Activated B cell treated with CpG ODN at 0.5 μM for 24 hours (primary cell): ENCODE measurements at regions of chr10 and their contacts with region 1.

Region 1: DNA sequence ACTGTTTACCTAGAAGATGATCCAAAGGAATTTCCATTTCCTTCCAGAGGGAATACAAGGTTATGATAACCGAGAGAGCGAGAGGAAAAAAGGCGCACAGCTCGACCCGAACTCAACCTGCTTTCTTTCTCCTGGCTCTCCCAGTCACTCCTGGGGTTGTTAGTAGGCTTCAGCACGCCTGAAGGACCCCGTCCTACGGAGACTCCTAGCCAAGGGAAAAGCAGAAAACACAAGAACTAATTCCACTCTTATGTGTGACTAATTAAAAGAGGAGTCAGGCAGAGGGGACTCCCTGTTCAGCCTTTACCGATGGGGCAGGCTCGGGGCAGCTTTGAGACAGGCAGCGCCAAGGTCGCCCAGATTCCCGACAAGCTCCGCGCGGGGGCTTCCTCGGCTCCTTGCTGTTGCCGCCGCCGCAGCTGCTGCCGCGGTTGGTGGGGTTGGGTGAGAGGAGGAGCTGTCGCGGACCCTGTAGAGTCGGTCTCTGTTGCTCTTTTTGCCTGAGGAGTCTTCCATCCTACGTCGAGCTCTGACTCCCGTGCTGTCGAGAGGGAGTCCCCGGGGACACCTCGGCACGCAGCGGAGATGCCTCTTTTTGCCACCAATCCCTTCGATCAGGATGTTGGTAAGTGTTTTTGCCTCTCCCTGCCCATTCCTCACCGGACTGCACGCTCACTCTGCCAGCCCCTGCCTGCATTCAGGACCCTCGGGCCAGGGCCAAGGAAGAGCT is at the start of gene STAM:
- DNase-seq: peak; percentile 86
- ATAC-seq: peak; percentile 91
- H3K4me3 Mint-ChIP-seq: peak within 1 kb of the TSS; percentile 99
- H3K27ac Mint-ChIP-seq: peak within 1 kb of the TSS; percentile 100
- H3K4me1 Mint-ChIP-seq: peaks cover 54% of the 10 kb centered on the region
- H3K27me3 Mint-ChIP-seq: no peaks in the 10 kb centered on the region
- CTCF ChIP-seq: no peak
- total RNA-seq, gene STAM: 25.5 and 28.7 TPM in 2 replicates

Region 2: DNA sequence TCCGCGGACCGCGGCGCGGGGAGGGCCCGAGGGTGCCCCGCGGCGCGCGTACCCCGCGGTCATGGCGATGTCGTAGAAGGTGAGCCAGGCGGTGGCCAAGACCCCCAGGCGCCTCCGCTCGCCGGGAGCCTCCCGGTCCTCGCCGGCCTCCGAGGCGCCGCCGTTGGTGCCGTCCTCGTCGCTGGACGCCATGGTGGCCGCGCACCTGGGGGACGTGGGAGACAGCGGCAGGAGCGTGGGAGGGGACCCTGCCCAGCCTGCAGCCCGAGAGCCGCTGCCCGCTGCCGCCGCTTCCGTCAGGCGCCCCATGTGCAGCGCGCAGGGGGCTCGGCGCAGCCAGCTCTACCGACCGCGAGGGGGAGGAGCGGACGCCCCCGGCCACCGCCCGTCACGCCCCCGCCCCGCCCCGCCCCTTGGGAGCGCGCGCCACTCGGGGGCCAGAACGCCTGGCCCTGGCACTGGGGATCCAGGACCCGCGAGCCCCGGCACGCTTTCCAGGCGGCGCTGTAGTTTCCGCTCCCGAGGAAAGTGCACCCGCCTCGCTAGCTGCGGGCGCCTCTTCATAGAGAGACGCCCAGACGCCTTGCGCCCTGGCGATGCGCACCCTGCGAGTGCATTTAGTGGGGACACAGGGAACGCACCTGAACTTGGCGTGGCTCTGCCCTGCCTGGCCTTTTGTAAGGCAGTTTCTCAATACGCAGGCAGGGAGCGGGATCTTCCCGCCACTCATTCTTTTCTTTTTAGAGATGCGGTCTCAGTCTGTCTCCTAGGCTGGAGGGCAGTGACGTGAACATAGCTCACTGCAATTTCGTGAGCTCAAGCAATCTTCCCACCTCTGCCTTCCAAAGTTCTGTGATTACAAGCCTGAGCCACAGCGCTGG is 26.6 kb before region 1 on chr10 and contains the start of gene HACD1:
- CTCF ChIA-PET with region 1: interaction called, 4 read pairs
- POLR2A ChIA-PET with region 1: interaction called, 10 read pairs
- intact Hi-C with region 1: loop called (anchors 1 kb)
- DNase-seq: peak; percentile 37
- ATAC-seq: peak; percentile 74
- H3K4me3 Mint-ChIP-seq: peak within 1 kb of the TSS; percentile 82
- H3K27ac Mint-ChIP-seq: no peak within 1 kb of the TSS
- H3K4me1 Mint-ChIP-seq: peaks cover 9% of the 10 kb centered on the region
- H3K27me3 Mint-ChIP-seq: peaks cover 16% of the 10 kb centered on the region
- CTCF ChIP-seq: no peak
- total RNA-seq, gene HACD1: 1.8 and 2.6 TPM in 2 replicates

Region 3: GRCh38 chr10:17655567-17656146 is 11.7 kb after region 1 on chr10:
- CTCF ChIA-PET with region 1: interaction called, 3 read pairs
- POLR2A ChIA-PET with region 1: interaction called, 22 read pairs
- intact Hi-C with region 1: loop called (anchors 1 kb)
- DNase-seq: no peak
- ATAC-seq: peak; percentile 91
- H3K4me3 Mint-ChIP-seq: peak overlapping the region; percentile 50
- H3K27ac Mint-ChIP-seq: peak overlapping the region; percentile 70
- H3K4me1 Mint-ChIP-seq: peaks cover 59% of the 10 kb centered on the region
- H3K27me3 Mint-ChIP-seq: no peaks in the 10 kb centered on the region
- CTCF ChIP-seq: no peak

Region 4: DNA sequence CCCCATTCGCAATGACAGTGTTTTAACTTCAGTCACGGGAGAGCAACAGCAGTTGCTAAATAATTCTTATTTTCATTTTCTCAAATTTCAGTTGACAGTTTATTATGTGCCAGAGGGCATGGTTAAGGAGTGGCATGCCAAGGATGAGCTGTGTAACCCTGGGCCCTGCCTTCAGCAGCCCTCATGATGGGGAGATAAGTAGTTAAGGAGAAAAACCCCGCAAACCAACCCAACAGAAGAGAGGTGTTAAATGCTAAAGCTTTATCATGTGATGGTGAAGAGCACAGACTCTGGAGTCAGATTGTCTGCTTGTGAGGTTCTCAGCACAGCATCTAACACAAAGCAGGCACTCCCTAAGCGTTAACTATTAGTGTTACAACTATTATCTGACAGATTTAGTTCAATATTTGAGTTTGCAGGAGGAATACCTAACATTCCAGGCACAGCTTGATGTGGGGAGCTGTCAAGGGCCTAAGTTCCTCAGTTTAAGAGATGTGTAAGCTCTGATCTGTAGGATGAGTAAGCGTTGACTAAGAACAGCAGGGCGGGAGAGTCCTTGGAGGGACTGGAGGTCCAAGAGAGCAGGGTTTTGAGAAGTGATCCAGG is 29.6 kb after region 1 on chr10:
- CTCF ChIA-PET with region 1: no interaction called
- POLR2A ChIA-PET with region 1: interaction called, 27 read pairs
- intact Hi-C with region 1: loop called (anchors 1 kb)
- DNase-seq: no peak
- ATAC-seq: no peak
- H3K4me3 Mint-ChIP-seq: no peak overlapping the region
- H3K27ac Mint-ChIP-seq: no peak overlapping the region
- H3K4me1 Mint-ChIP-seq: peaks cover 38% of the 10 kb centered on the region
- H3K27me3 Mint-ChIP-seq: no peaks in the 10 kb centered on the region
- CTCF ChIP-seq: no peak

Region 5: GRCh38 chr10:17685233-17685840 is 41.4 kb after region 1 on chr10:
- CTCF ChIA-PET with region 1: interaction called, 3 read pairs
- POLR2A ChIA-PET with region 1: interaction called, 8 read pairs
- intact Hi-C with region 1: loop called (anchors 2 kb)
- DNase-seq: no peak
- ATAC-seq: peak; percentile 79
- H3K4me3 Mint-ChIP-seq: peak overlapping the region; percentile 12
- H3K27ac Mint-ChIP-seq: peak overlapping the region; percentile 59
- H3K4me1 Mint-ChIP-seq: peaks cover 35% of the 10 kb centered on the region
- H3K27me3 Mint-ChIP-seq: no peaks in the 10 kb centered on the region
- CTCF ChIP-seq: no peak

Region 6: DNA sequence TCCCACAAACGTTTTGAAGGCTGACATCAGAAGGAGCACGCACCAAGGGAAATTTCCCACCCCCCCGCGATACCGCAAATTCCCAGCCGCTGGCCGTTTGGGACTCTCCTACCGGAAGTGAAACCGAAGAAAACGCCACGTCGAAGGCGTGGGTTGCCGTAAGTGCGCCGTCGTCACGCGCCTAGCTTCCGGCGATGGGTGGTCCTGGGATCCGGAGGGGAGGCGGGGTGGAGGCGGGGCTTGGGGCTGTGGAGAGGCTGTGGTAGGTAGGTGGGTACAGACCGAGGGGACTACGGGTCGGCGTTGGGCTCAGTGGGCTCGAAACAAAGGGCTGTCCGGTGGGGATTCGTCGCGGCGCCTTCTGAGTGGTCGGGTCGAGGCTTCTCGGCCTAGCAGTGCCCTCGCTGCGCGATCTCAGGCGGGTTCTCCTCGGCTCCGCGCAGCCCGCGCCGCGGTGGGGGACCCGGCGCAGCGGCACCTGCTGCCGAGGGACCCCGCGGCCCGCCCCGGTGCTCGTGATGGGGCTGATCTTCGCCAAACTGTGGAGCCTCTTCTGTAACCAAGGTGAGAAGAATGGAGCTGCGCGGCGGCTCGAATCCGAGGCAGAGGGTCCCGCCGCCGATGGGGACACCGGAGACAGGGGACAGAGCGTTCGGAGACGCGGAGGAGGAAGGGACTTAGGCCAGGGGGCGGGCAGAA is 1015.3 kb after region 1 on chr10 and contains the start of gene ARL5B:
- CTCF ChIA-PET with region 1: no interaction called
- POLR2A ChIA-PET with region 1: interaction called, 10 read pairs
- intact Hi-C with region 1: loop called (anchors 1 kb)
- DNase-seq: peak; percentile 94
- ATAC-seq: peak; percentile 97
- H3K4me3 Mint-ChIP-seq: peak within 1 kb of the TSS; percentile 98
- H3K27ac Mint-ChIP-seq: peak within 1 kb of the TSS; percentile 97
- H3K4me1 Mint-ChIP-seq: peaks cover 41% of the 10 kb centered on the region
- H3K27me3 Mint-ChIP-seq: no peaks in the 10 kb centered on the region
- CTCF ChIP-seq: no peak
- total RNA-seq, gene ARL5B: 9.4 and 10.6 TPM in 2 replicates

Region 7: GRCh38 chr10:19194866-19195265 is 1550.9 kb after region 1 on chr10:
- CTCF ChIA-PET with region 1: no interaction called
- POLR2A ChIA-PET with region 1: no interaction called
- intact Hi-C with region 1: no loop called
- DNase-seq: no peak
- ATAC-seq: no peak
- H3K4me3 Mint-ChIP-seq: no peak overlapping the region
- H3K27ac Mint-ChIP-seq: no peak overlapping the region
- H3K4me1 Mint-ChIP-seq: no peaks in the 10 kb centered on the region
- H3K27me3 Mint-ChIP-seq: no peaks in the 10 kb centered on the region
- CTCF ChIP-seq: no peak